Psoas muscle (tissue), 8 donors: ENCODE measurements at regions of chr12 and their contacts with region 1.

Region 1: DNA sequence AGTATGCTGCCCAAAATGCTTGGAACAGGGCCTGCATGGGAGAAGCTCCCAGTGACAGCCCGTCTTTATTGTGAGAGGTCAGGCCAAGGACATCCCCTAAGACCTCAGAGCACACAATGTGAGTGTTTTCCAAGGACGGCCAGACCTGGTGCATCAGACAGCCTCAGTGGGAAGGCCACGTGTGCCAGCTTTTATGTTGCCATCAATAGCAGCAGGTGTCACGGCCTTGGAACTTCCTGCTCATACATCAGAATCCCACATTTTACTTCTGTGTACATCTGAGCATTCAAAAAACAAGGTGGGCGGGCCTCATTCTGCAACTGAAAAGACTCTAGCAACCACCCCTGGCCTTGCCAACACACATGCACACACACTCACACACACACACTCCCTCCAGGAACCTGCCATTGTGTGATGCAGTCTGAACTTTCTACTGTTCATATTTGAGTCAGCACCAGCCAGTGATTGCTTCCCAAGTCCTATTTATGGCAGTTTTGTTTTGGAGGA is 753.1 kb upstream of the TBX3 start:
- DNase-seq: no peak
- ATAC-seq: peak in 3 of 4 donors; percentile 22 to 49 (median 35)
- H3K4me3 ChIP-seq: no peak overlapping the region
- H3K27ac ChIP-seq: no peak overlapping the region
- H3K4me1 ChIP-seq: no peaks in the 10 kb centered on the region
- H3K27me3 ChIP-seq: no peaks in the 10 kb centered on the region
- CTCF ChIP-seq: no peak

Region 2: DNA sequence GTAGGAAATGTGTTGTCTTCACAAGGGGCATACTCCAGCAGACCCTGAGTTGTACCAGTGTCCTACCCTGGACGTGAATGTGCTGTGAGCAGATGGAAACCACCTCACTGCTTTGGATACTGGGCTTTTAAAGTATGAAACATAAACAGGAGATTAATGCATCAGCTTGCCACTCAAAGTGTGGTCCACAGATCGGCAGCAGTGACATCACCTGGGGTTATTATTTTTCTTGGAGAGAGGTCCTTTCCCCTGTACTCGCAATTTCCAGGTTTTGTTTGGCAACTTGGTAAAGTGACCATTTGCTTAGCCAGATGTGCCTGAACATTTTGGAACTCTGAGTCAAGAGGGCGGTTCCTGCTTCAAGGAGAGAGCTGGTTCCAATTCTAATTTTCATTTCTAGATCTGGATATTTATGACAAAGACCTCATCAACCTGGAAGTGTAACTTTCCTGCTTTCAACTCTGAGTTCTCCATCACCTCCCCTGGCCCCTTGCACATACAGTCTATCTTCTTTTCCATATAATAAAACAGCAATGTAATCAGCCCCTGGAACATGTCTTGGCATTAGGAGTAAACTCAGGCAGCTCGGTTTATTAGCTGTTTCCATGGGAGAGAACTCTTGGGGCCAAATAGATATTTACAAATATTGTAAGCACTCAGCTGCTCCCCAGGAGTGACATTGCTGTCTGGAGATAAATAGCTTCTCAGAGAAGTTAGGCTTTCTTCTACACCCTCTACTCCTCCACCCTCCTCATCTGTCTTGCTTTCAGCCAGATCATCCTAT is 516.2 kb before region 1 on chr12:
- intact Hi-C with region 1: loop called in 1 of 2 experiments (anchors 10 kb)
- DNase-seq: no peak
- ATAC-seq: peak in 1 of 4 donors; percentile 38
- H3K4me3 ChIP-seq: no peak overlapping the region
- H3K27ac ChIP-seq: no peak overlapping the region
- H3K4me1 ChIP-seq: no peaks in the 10 kb centered on the region
- H3K27me3 ChIP-seq: peaks cover 0 to 2% (median 0%) of the 10 kb centered on the region in 3 donors
- CTCF ChIP-seq: no peak

Region 3: GRCh38 chr12:115481141-115481540 is 44.0 kb after region 1 on chr12:
- intact Hi-C with region 1: no loop called
- DNase-seq: no peak
- ATAC-seq: peak in 2 of 4 donors; percentile 27 to 43
- H3K4me3 ChIP-seq: no peak overlapping the region
- H3K27ac ChIP-seq: no peak overlapping the region
- H3K4me1 ChIP-seq: no peaks in the 10 kb centered on the region
- H3K27me3 ChIP-seq: no peaks in the 10 kb centered on the region
- CTCF ChIP-seq: no peak